OCI-LY7 (cell line): ENCODE measurements at regions of chr18 and their contacts with region 1.

Region 1: DNA sequence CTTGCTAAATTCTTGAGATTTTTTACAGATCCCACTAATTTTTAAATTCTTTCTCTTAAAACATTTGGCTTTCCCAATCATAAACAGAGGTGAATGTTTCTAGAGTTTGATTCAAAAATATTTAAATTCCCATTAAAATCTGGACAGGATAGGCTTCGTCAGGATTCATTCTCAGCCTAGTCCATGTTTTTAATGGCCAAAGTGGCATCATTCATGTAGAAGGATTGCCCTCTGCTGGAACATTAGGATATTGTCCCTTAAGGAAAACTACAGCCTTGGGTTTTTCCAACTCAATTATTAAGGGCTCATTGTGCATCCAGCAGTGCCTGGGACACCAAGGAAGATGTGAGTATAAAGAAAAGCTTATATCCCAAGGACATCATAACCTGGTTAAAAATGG is 71.7 kb downstream of the TPGS2 start:
- DNase-seq: peak; percentile 31
- H3K4me3 ChIP-seq: no peak overlapping the region
- H3K27ac ChIP-seq: no peak overlapping the region
- H3K4me1 ChIP-seq: no peaks in the 10 kb centered on the region
- CTCF ChIP-seq: peak; percentile 71

Region 2: DNA sequence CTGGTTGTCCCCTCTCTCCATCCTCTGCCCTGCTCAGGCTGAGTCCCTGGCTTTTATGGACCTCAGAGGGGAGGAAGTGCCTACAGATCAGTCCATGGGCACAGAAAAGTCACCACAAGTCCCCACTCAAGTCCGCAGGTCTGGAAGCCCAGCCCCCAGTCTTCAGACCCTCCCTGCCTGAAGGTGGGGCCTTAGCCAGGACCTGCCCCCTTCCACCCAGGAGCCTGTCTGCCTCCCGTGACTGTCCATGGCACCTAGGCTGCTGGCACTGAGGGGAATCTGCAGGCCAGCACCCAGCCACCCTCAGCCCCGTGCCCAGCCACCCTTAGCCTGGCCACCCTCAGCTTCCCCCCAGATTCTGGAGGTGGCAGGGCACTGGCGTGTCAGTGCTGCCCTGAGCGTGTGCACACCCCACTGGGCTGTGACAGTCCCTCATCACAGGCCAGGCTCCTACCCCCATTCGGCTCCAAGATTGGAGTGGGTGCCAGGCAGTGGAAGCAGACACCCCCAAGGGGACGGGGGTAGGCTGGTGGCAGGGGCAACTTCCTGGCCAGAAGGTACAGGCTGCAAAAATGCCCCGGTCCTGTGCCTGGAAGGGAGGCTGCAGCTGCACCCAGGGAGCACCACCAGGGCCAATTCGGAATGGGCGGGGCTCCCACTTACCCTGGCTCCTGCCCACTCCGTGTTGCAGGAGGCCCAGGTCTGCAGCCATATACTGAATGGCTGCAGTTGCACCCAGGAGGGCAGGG is 939.3 kb before region 1 on chr18:
- CTCF ChIA-PET with region 1: no interaction called
- POLR2A ChIA-PET with region 1: no interaction called
- intact Hi-C with region 1: no loop called
- DNase-seq: no peak
- H3K4me3 ChIP-seq: no peak overlapping the region
- H3K27ac ChIP-seq: no peak overlapping the region
- H3K4me1 ChIP-seq: no peaks in the 10 kb centered on the region
- CTCF ChIP-seq: no peak

Region 3: GRCh38 chr18:36572135-36572856 is 184.8 kb before region 1 on chr18:
- CTCF ChIA-PET with region 1: no interaction called
- POLR2A ChIA-PET with region 1: no interaction called
- intact Hi-C with region 1: loop called (anchors 5 kb)
- DNase-seq: peak; percentile 21
- H3K4me3 ChIP-seq: no peak overlapping the region
- H3K27ac ChIP-seq: no peak overlapping the region
- H3K4me1 ChIP-seq: no peaks in the 10 kb centered on the region
- CTCF ChIP-seq: peak; percentile 75